Sciatic nerve (tissue), 2 donors: ENCODE measurements at regions of chr3 and their contacts with region 1.

Region 1: DNA sequence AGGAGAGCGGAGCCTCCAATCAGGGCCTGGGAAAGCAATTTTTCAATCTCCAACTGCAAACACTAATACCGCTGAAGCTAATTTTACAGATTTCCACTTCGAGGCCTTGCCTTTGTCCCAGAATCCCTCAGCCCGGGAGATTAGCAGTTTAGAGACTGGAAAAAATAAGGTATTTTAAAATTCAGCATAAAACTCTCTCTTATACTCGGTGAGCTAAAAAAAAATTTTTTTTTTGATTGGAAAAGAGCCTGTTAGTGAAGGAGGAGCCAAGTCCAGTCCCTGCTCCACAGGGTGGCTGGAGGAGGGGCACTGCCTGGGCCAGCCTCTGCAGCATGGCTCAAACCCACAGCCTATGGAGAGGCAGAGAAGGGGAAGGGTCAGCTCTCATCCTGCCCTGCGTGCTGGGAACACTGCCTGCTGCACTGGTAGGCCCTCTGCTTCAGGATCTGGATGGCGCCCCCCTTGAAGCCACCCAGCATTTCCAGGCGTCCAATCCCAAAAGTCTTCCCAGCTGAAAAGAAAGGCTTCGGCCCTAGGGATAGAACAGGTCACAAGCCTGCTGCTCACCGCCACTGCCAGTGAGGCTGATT is 48.9 kb downstream of the CACNA2D2 start:
- DNase-seq: no peak
- ATAC-seq: no peak

Region 2: GRCh38 chr3:50648313-50648712 is 193.7 kb after region 1 on chr3:
- intact Hi-C with region 1: loop called (anchors 5 kb)
- DNase-seq: no peak
- ATAC-seq: no peak

Region 3: GRCh38 chr3:50950591-50950990 is 496.0 kb after region 1 on chr3:
- intact Hi-C with region 1: no loop called
- DNase-seq: no peak
- ATAC-seq: no peak

Region 4: GRCh38 chr3:51530490-51530889 is 1075.9 kb after region 1 on chr3:
- intact Hi-C with region 1: no loop called
- DNase-seq: no peak
- ATAC-seq: no peak